Dorsolateral prefrontal cortex (tissue), 120 donors: ENCODE measurements at regions of chr13 and their contacts with region 1.

Region 1: DNA sequence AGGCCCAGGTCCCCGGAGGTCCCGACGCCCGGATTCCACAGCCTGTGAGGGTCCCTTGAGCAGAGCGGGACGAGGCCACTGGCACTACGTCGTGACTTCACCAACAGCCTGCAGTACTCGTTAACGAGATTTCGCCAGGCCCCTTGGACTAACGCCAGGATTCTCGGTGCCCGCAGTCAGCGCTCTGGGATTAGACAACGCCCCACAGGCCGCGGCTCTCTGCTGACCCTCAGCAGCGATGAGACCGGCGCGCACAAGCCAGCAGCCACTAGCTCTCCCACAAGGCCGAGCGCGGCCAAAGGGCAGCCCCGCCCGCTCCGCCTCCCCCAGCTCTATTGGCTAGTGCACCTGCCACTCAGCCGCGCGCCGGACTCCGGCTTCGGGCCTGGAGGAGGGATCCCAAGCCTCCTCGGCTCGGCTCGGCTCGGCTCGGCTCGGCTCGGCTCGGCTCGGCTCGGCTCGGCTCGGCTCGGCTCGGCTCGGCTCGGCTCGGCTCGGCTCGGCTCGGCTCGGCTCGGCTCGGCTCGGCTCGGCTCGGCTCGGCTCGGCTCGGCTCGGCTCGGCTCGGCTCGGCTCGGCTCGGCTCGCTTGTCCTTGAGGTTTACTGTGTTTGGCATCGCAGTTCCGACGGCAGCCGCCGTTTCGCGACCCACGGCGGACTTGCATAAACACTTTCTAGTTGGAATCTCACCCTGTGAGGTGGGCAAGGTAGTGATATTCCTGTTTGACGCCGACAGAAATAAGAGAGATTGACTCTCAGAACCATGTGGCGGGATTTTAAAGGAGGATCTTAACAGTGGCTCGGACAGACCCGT is 231.7 kb upstream of the SERP2 start:
- DNase-seq: peak; percentile 95 to 100 (median 98)
- H3K4me3 ChIP-seq: peak overlapping the region; percentile 52 to 89 (median 72)
- H3K27ac ChIP-seq: peak overlapping the region; percentile 83 to 100 (median 98)
- H3K27me3 ChIP-seq: no peaks in the 10 kb centered on the region
- CTCF ChIP-seq: peak in 24 of 56 donors; percentile 1 to 43 (median 20)

Region 2: GRCh38 chr13:43905435-43906031 is 236.4 kb before region 1 on chr13:
- intact Hi-C with region 1: loop called (anchors 10 kb)
- DNase-seq: peak in 2 of 10 donors; percentile 35 to 51
- H3K4me3 ChIP-seq: no peak overlapping the region
- H3K27ac ChIP-seq: no peak overlapping the region
- H3K27me3 ChIP-seq: no peaks in the 10 kb centered on the region
- CTCF ChIP-seq: peak; percentile 81 to 98 (median 92)

Region 3: DNA sequence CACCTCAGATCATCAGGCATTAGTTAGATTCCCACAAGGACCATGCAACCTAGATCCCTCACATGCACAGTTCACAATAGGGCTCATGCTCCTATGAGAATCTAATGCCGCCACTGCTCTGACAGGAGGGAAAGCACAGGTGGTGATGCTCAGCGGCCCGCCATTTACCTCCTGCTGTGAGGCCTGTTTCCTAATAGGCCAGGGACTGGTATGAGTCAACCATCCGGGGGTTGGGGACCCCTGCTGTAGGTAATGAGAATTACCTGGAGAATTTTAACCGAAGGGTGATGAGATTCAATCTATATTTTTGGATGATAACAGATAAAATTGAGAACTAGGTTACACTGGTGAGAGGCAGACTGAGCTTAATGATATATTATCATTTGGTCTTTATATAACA is 160.8 kb before region 1 on chr13:
- intact Hi-C with region 1: no loop called
- DNase-seq: no peak
- H3K4me3 ChIP-seq: no peak overlapping the region
- H3K27ac ChIP-seq: no peak overlapping the region
- H3K27me3 ChIP-seq: no peaks in the 10 kb centered on the region
- CTCF ChIP-seq: peak in 1 of 56 donors; percentile 10

Region 4: DNA sequence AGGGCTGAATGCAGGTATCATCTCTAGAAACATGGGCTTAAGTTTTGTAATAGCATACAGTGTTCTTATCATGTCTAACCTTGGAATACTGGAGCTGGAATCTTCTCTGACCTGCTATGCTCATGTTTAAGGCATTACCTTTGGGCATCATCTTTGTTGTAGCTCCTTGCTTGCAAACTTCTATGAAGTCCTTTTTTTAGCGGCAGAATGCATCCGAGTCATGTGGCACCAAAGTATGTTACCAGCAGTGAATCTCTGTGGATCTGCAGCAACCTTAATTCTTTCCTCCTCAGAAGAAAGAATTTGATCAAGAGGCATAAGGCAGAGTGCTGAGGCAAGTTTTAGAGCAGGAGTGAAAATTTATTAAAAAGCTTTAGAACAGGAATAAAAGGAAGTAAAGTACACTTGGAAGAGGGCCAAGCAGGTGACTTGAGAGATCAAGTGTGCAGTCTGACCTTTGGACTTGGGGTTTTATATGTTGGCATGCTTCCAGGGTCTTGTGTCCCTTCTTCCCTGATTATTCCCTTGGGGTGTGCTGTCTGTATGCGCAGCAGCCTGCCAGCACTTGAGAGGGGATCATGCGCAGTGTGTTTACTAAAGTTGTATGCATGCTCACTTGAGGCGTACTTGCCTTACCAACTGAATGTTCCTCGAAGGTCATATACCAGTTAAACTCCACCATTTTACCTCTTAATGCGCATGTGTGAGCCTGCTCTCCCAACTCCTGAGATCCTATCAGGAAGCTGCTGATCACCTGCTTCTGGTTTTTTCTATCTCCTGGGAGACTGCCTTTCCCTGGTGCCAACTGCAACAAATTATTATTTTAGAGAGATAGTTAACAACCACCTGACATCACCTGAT is 146.7 kb before region 1 on chr13:
- intact Hi-C with region 1: no loop called
- DNase-seq: no peak
- H3K4me3 ChIP-seq: no peak overlapping the region
- H3K27ac ChIP-seq: no peak overlapping the region
- H3K27me3 ChIP-seq: no peaks in the 10 kb centered on the region
- CTCF ChIP-seq: no peak

Region 5: GRCh38 chr13:44050450-44051063 is 91.4 kb before region 1 on chr13:
- intact Hi-C with region 1: loop called (anchors 1 to 10 kb)
- DNase-seq: peak in 1 of 10 donors; percentile 15
- H3K4me3 ChIP-seq: peak overlapping the region in 2 of 59 donors; percentile 3 to 14
- H3K27ac ChIP-seq: peak overlapping the region in 3 of 59 donors; percentile 7 to 47 (median 28)
- H3K27me3 ChIP-seq: no peaks in the 10 kb centered on the region
- CTCF ChIP-seq: peak; percentile 69 to 96 (median 88)

Region 6: DNA sequence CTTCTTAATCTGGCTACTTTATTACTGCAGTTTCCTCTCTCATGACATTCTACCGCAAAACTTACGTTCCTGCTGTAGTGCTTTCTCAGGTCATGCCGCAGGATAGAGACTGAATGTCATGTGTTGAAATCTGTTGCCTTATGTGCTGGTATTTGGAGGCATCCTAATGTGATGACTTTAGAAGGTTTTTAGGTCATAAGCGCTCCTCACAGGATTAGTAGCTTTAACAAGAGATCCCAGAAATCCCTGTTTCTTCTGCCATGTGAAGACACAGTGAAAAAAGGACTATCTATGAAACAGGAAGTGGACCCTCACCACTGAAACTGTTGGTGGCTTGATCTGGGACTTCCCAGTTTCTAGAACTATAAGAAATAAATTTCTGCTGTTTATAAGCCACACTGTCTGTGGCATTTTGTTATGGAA is 52.9 kb before region 1 on chr13:
- intact Hi-C with region 1: no loop called
- DNase-seq: no peak
- H3K4me3 ChIP-seq: no peak overlapping the region
- H3K27ac ChIP-seq: no peak overlapping the region
- H3K27me3 ChIP-seq: no peaks in the 10 kb centered on the region
- CTCF ChIP-seq: no peak

Region 7: GRCh38 chr13:44108331-44108858 is 33.5 kb before region 1 on chr13:
- intact Hi-C with region 1: loop called in 1 of 2 experiments (anchors 5 kb)
- DNase-seq: no peak
- H3K4me3 ChIP-seq: no peak overlapping the region
- H3K27ac ChIP-seq: peak overlapping the region in 4 of 59 donors; percentile 22 to 36 (median 28)
- H3K27me3 ChIP-seq: no peaks in the 10 kb centered on the region
- CTCF ChIP-seq: no peak

Region 8: GRCh38 chr13:44174769-44175425 is 33.0 kb after region 1 on chr13:
- intact Hi-C with region 1: no loop called
- DNase-seq: no peak
- H3K4me3 ChIP-seq: no peak overlapping the region
- H3K27ac ChIP-seq: peak overlapping the region in 28 of 59 donors; percentile 1 to 73 (median 35)
- H3K27me3 ChIP-seq: no peaks in the 10 kb centered on the region
- CTCF ChIP-seq: no peak

Region 9: DNA sequence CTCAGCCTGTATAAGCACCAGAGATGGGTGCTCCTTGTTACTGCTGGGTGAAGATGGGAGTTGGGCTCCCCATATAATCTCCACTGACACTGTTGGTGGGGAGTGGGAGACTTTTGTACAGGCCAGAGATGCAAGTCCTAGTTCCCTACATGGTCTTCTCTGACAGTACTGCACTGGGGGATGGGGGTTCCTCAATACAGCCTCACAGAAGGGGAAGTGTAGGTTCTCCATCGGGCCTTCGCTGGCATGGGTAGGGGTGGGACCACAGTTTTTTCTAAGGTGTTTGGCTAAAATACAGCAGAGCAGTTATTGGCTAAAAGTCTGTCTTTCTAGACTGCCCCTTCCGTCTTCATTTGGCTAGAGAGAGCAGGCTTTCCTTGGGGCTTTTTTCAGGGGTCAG is 64.5 kb after region 1 on chr13:
- intact Hi-C with region 1: loop called (anchors 5 kb)
- DNase-seq: no peak
- H3K4me3 ChIP-seq: no peak overlapping the region
- H3K27ac ChIP-seq: peak overlapping the region in 5 of 59 donors; percentile 5 to 48 (median 23)
- H3K27me3 ChIP-seq: no peaks in the 10 kb centered on the region
- CTCF ChIP-seq: no peak

Region 10: GRCh38 chr13:44212633-44213403 is 70.9 kb after region 1 on chr13:
- intact Hi-C with region 1: loop called (anchors 5 kb)
- DNase-seq: no peak
- H3K4me3 ChIP-seq: no peak overlapping the region
- H3K27ac ChIP-seq: peak overlapping the region; percentile 32 to 100 (median 98)
- H3K27me3 ChIP-seq: no peaks in the 10 kb centered on the region
- CTCF ChIP-seq: no peak

Region 11: DNA sequence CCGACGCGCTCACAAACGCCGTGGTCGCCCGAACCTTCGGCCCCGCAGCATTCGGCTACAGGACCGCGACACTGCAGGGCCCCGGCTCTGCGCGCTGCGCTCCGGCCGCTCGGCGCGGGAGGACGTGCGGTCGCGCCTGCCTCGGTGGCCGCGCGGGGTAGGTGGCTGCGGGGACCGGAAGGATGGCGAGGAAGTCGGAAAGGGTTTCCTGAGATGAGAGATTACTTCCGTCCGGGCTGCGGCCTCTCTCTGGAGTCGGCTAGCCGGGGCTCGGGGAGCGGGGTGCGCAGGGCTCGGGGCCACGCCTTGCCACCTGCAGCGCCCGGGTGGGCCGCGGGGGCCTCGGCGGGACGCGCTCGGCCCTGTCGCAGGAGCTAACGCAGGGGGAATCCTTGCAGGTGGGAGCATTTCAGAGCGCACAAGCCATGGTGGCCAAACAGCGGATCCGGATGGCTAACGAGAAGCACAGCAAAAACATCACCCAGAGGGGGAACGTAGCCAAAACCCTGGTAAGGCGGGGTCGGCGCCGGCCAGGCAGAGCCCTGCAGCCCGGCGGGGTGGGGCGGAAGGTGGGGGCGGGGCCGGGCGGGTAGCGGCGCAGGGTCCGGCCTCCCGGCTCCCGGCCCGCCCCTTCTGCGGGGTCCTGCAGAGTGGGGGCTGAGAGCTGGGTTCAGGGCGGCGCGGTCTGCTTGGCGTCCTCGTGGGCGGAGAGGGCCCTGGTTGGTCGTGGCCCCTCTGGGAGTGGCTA is 231.8 kb after region 1 on chr13 and contains the start of gene SERP2:
- intact Hi-C with region 1: loop called in 1 of 2 experiments (anchors 10 kb)
- DNase-seq: peak in 8 of 10 donors; percentile 28 to 75 (median 54)
- H3K4me3 ChIP-seq: peak within 1 kb of the TSS; percentile 54 to 94 (median 82)
- H3K27ac ChIP-seq: peak within 1 kb of the TSS; percentile 64 to 99 (median 94)
- H3K27me3 ChIP-seq: no peaks in the 10 kb centered on the region
- CTCF ChIP-seq: peak in 3 of 56 donors; percentile 1 to 15 (median 12)
- total RNA-seq, gene SERP2: 37.0 to 96.0 (median 70.9) TPM